Vagina (tissue), 2 donors: ENCODE measurements at regions of chr1 and their contacts with region 1.

Region 1: DNA sequence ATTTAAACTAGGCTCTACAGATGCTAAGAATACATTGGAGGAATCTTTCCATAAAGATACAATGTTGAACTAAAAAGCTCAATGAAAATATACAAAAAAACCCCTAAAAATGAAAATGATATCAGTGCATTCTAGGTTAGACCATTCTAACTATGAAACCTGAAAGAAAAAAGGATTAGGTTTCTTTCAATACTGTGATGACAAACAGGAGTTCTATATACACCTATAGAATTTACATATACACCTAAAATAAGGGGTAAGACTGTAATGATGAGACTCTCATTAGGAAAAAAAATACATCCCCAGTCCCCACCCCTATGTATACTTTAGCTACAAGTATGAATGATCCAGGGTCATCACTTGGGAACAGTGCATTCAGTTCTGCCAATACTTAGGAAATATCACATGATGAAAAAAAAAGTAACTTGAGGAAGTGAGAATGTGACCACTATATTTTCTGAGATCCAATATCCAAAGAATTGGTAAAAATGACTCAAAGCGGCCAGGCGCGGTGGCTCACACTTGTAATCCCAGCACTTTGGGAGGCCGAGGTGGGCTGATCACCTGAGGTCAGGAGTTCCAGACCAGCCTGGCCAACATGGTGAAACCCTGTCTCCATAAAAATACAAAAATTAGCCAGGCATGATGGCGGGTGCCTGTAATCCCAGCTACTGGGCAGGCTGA is 26.3 kb downstream of the SELENOF start:
- DNase-seq: no peak
- H3K4me3 ChIP-seq: no peak overlapping the region
- H3K27ac ChIP-seq: no peak overlapping the region
- H3K4me1 ChIP-seq: no peaks in the 10 kb centered on the region
- H3K27me3 ChIP-seq: no peaks in the 10 kb centered on the region
- CTCF ChIP-seq: no peak
- POLR2A ChIP-seq: no peak

Region 2: GRCh38 chr1:85818371-85818770 is 1069.2 kb before region 1 on chr1:
- intact Hi-C with region 1: loop called (anchors 5 kb)
- DNase-seq: no peak
- H3K4me3 ChIP-seq: no peak overlapping the region
- H3K27ac ChIP-seq: peak overlapping the region; percentile 49
- H3K4me1 ChIP-seq: no peaks in the 10 kb centered on the region
- H3K27me3 ChIP-seq: no peaks in the 10 kb centered on the region
- CTCF ChIP-seq: no peak
- POLR2A ChIP-seq: no peak

Region 3: DNA sequence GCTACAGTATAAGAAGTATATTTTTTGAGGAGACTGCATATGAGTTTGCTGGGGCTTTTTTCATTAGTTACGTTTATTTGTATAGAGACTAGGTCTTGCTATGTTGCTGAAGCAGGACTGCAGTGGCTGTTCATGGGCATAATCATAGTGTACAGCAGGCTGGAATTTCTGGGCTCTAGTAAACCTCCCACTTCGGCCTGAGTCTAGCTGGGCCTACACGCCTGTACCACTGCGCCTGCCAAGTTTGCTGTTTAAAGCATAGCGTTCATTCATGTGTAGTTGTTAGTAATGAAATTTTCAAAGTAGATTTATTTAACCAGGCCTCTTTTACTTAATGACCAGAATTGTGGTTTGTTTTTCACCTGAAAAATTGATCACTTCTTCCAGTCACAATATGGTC is 60.6 kb after region 1 on chr1:
- intact Hi-C with region 1: no loop called
- DNase-seq: no peak
- H3K4me3 ChIP-seq: no peak overlapping the region
- H3K27ac ChIP-seq: no peak overlapping the region
- H3K4me1 ChIP-seq: no peaks in the 10 kb centered on the region
- H3K27me3 ChIP-seq: no peaks in the 10 kb centered on the region
- CTCF ChIP-seq: no peak
- POLR2A ChIP-seq: no peak